Mammary epithelial cell (primary cell): ENCODE measurements at regions of chr4 and their contacts with region 1.

Region 1: GRCh38 chr4:54165438-54165837 is 63.7 kb upstream of the PDGFRA start:
- DNase-seq: peak; percentile 75
- H3K4me3 ChIP-seq: no peak overlapping the region
- H3K27ac ChIP-seq: peak overlapping the region; percentile 18
- H3K4me1 ChIP-seq: peaks cover 19% of the 10 kb centered on the region
- H3K27me3 ChIP-seq: no peaks in the 10 kb centered on the region
- CTCF ChIP-seq: peak in 1 of 2 donors; percentile 40

Region 2: GRCh38 chr4:53929955-53930798 is 235.3 kb before region 1 on chr4:
- CTCF ChIA-PET with region 1: no interaction called
- dilution Hi-C with region 1: no loop called
- in situ Hi-C with region 1: no loop called
- intact Hi-C with region 1: loop called (anchors 5 kb)
- DNase-seq: peak; percentile 73
- H3K4me3 ChIP-seq: no peak overlapping the region
- H3K27ac ChIP-seq: no peak overlapping the region
- H3K4me1 ChIP-seq: peaks cover 28% of the 10 kb centered on the region
- H3K27me3 ChIP-seq: no peaks in the 10 kb centered on the region
- CTCF ChIP-seq: peak; percentile 75 to 89

Region 3: GRCh38 chr4:54099748-54100574 is 65.5 kb before region 1 on chr4 and contains the start of gene GSX2:
- CTCF ChIA-PET with region 1: no interaction called
- dilution Hi-C with region 1: no loop called
- in situ Hi-C with region 1: no loop called
- intact Hi-C with region 1: loop called (anchors 5 kb)
- DNase-seq: peak; percentile 12
- H3K4me3 ChIP-seq: peak within 1 kb of the TSS; percentile 34 to 49 (median 47)
- H3K27ac ChIP-seq: no peak within 1 kb of the TSS
- H3K4me1 ChIP-seq: peaks cover 21% of the 10 kb centered on the region
- H3K27me3 ChIP-seq: peaks cover 23% of the 10 kb centered on the region
- CTCF ChIP-seq: no peak
- total RNA-seq, gene GSX2: not detected